ENCODE measurements at regions of chr9 and their contacts with region 1.

Region 1: DNA sequence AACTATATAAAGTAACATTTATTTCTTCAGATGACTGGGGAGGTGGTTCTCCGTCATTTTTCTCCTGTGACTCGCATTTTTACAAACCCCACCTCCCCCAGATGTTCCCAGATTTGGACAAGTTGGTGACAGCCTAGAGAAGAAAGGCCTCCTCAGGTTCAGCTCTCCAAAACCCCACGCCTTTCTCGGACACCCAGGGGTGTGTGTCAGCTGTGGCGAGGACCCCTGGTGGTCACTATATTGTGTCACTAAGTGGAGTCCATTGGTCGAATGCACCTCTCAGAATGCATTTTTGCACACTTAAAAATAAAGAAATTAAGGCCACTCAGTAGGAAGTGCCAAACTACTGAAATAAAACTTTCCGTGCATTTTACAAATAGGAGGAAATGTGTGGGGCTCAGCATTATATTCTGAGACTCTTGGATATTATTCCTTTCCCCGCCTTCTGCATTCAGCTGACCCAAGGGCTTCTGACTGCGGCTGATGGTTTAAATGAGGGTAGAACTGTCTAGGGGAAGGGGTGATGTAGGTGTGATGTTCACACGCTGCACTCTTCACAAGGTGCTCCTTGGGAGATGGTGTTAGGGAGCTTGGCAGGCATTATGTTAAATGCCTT is 47.6 kb downstream of the ACO1 start:
- DNase-seq: no peak
- H3K4me3 ChIP-seq: no peak overlapping the region
- H3K27me3 ChIP-seq: no peaks in the 10 kb centered on the region
- CTCF ChIP-seq: peak; percentile 64

Region 2: DNA sequence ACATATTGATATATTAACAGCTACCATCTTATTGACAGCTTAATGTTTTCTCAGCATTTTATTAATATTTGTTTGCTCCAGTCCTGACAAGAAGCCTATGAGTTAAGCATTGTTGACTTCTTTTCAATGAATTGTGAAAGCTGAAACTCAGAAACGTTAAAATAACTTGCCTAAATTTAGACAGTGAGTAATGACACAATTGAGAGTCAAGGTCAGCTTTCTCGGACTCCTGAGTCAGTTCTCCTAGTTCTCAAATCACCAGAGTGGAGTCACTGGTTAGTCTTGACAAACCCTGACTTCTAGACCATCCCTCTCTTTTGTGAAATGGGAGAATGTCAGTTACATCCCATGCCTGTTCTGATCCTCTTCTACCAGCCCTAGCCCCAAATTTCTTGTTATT is 270.3 kb before region 1 on chr9:
- CTCF ChIA-PET with region 1: no interaction called
- POLR2A ChIA-PET with region 1: no interaction called
- DNase-seq: no peak
- H3K4me3 ChIP-seq: no peak overlapping the region
- H3K27me3 ChIP-seq: no peaks in the 10 kb centered on the region
- CTCF ChIP-seq: no peak

Region 3: GRCh38 chr9:32442433-32442832 is 10.4 kb after region 1 on chr9:
- CTCF ChIA-PET with region 1: interaction called, 11 read pairs
- POLR2A ChIA-PET with region 1: no interaction called
- DNase-seq: no peak
- H3K4me3 ChIP-seq: no peak overlapping the region
- H3K27me3 ChIP-seq: no peaks in the 10 kb centered on the region
- CTCF ChIP-seq: no peak

Region 4: GRCh38 chr9:32508728-32509127 is 76.7 kb after region 1 on chr9:
- CTCF ChIA-PET with region 1: no interaction called
- POLR2A ChIA-PET with region 1: no interaction called
- DNase-seq: no peak
- H3K4me3 ChIP-seq: no peak overlapping the region
- H3K27me3 ChIP-seq: no peaks in the 10 kb centered on the region
- CTCF ChIP-seq: no peak

Region 5: DNA sequence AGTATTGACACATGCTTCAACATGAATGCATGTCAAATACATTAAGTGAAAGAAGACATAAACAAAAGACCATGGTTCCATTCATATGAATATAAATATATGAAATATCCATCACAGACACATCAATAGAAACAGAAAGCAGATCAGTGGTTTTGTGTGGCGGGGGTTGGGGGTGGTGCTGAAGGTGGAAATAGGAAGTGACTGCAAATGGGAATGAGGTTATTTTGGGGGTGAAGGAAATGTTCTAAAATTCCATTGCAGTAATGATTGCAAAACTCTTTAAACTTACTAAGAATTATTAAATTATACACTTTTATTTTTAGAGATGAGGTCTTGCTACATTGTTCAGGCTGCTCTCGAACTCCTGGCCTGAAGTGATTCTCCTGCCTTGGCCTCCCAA is 174.8 kb after region 1 on chr9:
- CTCF ChIA-PET with region 1: no interaction called
- POLR2A ChIA-PET with region 1: no interaction called
- DNase-seq: no peak
- H3K4me3 ChIP-seq: no peak overlapping the region
- H3K27me3 ChIP-seq: no peaks in the 10 kb centered on the region
- CTCF ChIP-seq: no peak

Region 6: GRCh38 chr9:32631991-32632390 is 199.9 kb after region 1 on chr9:
- CTCF ChIA-PET with region 1: no interaction called
- POLR2A ChIA-PET with region 1: no interaction called
- DNase-seq: no peak
- H3K4me3 ChIP-seq: no peak overlapping the region
- H3K27me3 ChIP-seq: no peaks in the 10 kb centered on the region
- CTCF ChIP-seq: no peak

Measured in BJ (cell line).